WTC11 (cell line): ENCODE measurements at regions of chr17 and their contacts with region 1.

Region 1: DNA sequence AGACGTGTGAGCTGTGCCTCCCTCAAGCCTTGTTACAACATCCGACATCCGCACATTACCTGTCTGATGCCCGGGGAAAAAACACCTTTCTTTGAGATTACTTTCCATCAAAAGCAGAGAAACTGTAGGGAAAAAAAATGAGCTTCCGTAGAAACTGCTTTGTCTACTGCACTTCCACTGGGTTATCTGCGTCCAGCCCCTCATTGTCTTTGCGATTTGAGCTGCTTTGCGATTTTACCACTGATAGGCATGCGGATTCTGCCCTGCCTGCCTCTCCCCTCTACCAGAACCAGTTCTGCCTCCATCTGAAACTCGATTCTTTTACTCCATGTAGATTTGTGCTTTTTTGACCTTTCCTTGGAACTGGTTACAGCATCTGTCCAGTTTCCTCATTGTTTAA is 43.7 kb upstream of the FASN start:
- DNase-seq: no peak
- ATAC-seq: no peak
- H3K4me3 Mint-ChIP-seq: no peak overlapping the region
- H3K27ac Mint-ChIP-seq: no peak overlapping the region
- H3K4me1 Mint-ChIP-seq: no peaks in the 10 kb centered on the region
- H3K27me3 Mint-ChIP-seq: no peaks in the 10 kb centered on the region
- CTCF ChIP-seq: no peak

Region 2: DNA sequence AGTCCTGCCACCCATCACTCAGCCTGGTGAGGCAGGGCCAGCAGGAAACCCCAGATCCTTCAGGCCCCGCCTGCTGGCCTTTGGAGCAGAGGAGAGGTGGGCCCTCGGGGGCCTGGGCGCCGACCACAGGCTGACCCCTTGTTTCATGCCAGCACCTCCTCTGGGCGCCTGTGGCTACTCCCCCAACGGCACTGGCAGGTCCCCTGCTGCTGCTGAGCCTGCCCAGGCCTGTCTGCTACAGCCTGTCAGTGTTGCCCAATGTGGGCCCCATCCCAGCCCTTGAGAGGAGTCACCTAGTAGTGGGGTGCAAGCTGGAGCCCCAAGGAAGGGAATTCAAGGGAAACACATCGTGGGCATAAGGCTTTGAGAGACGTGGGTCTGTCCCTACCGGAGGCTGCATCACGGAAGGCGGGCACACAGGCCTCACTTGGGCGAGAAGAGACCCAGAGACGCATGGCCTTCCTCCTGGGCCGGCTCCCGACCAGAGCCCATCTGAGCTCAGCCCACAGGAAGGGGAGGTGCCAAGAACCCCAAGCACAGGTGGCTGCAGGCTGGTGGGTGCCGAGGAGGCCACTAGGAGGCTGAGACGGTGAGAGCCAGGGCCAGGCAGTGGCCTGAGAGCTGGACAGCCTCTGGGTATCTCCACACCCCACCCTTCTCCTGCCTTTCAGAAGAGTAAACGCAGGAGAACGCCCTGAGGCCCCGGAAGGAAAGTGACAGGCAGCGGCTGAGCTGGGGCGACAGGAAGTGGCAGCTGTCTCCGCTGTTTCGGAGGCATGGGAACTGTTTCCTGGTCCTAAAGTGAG is 35.6 kb before region 1 on chr17:
- CTCF ChIA-PET with region 1: interaction called, 10 read pairs
- POLR2A ChIA-PET with region 1: interaction called, 3 read pairs
- DNase-seq: peak; percentile 77
- ATAC-seq: peak; percentile 83
- H3K4me3 Mint-ChIP-seq: no peak overlapping the region
- H3K27ac Mint-ChIP-seq: peak overlapping the region; percentile 53
- H3K4me1 Mint-ChIP-seq: peaks cover 44% of the 10 kb centered on the region
- H3K27me3 Mint-ChIP-seq: peaks cover 32% of the 10 kb centered on the region
- CTCF ChIP-seq: no peak

Region 3: GRCh38 chr17:82153745-82154375 is 12.2 kb after region 1 on chr17:
- CTCF ChIA-PET with region 1: interaction called, 17 read pairs
- POLR2A ChIA-PET with region 1: no interaction called
- DNase-seq: peak; percentile 89
- ATAC-seq: peak; percentile 95
- H3K4me3 Mint-ChIP-seq: no peak overlapping the region
- H3K27ac Mint-ChIP-seq: peak overlapping the region; percentile 36; the same call in 1 of the 2 replicates
- H3K4me1 Mint-ChIP-seq: 0 out of 2 replicates have a peak, but pooled peaks cover 3% of the 10 kb centered on the region
- H3K27me3 Mint-ChIP-seq: no peaks in the 10 kb centered on the region; the same call in 1 of the 2 replicates
- CTCF ChIP-seq: peak; percentile 84

Region 4: DNA sequence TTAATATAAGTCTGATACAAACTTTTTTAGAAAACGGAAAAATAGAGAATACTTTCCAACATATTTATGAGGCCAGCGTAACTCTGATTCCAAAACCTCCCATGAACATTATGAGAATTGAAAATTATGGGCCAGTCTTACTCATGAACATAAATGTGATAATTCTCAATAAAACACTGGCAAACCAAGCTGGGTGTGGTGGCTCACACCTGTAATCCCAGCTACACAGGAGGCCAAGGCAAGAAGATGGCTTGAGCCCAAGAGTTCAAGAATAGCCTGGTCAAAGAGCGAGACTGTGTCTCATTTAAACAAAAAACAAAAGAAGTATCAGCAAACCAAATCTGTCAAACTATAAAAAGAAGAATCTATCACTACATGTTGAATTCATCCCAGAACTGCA is 23.1 kb after region 1 on chr17:
- CTCF ChIA-PET with region 1: no interaction called
- POLR2A ChIA-PET with region 1: no interaction called
- DNase-seq: no peak
- ATAC-seq: no peak
- H3K4me3 Mint-ChIP-seq: no peak overlapping the region
- H3K27ac Mint-ChIP-seq: no peak overlapping the region
- H3K4me1 Mint-ChIP-seq: no peaks in the 10 kb centered on the region
- H3K27me3 Mint-ChIP-seq: peaks cover 34% of the 10 kb centered on the region
- CTCF ChIP-seq: no peak